ENCODE measurements at regions of chr5 and their contacts with region 1.

Region 1: DNA sequence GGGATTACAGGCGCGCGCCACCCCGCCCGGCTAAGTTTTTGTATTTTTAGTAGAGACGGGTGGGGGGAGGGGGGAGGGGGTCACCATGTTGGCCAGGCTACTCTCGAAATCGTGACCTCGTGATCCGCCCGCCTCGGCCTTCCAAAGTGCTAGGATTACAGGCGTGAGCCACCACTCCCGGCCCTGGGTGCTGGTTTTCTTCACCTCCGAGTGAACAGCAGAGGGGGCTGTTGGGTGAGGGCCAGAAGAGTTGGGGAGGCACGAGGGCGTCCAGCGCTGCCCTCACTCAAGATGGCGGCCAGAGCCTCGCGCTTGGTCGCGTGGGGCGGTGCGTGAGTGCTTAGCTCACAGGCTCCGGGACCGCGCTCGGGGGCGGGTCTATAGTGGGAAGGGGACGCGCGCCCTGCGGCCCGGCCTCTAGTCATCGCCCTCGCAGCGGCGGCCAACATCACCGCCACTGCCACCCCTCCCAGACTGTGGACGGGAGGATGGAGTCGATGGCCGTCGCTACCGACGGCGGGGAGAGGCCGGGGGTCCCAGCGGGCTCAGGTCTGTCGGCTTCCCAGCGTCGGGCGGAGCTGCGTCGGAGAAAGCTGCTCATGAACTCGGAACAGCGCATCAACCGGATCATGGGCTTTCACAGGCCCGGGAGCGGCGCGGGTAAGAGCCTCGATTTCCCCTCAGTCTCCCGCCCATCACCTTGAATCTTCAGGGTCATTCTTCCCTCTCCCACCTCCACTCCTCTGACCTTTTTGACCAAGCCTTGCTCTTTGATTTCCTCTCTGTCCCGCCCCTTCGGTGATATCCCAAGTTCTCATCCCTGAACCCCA is at the start of gene CAMLG:
- DNase-seq: peak; percentile 98
- ATAC-seq: peak; percentile 97
- H3K4me3 ChIP-seq: peak within 1 kb of the TSS; percentile 69 to 94 (median 89)
- H3K4me3 Mint-ChIP-seq: peak within 1 kb of the TSS; percentile 90
- H3K27ac ChIP-seq: peak within 1 kb of the TSS; percentile 77 to 89
- H3K27ac Mint-ChIP-seq: peak within 1 kb of the TSS; percentile 89
- H3K4me1 ChIP-seq: peaks cover 24 to 42% of the 10 kb centered on the region in 2 donors
- H3K4me1 Mint-ChIP-seq: peaks cover 33% of the 10 kb centered on the region
- H3K27me3 ChIP-seq: no peaks in the 10 kb centered on the region
- H3K27me3 Mint-ChIP-seq: no peaks in the 10 kb centered on the region
- CTCF ChIP-seq: peak; percentile 77
- total RNA-seq, gene CAMLG: 27.5 and 29.7 TPM in 2 replicates

Region 2: DNA sequence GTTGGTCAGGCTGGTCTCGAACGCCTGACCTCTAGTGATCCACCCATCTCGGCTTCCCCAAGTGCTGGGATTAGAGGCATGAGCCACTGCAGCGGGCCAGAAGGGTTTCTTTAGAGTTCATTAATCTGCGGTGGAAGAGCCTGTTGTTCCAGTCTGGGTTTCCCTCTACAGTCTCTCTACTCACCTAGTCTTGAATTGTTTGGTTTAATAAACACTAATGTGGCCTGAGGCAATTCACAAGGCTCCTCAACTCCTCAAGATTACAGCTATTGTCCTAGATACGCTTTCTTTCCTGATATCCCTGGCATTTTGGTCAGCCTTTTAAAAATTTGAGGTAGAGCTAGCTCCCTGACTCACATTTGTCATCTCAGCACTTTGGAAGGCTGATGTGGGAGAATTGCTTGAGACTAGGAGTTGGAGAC is 101.2 kb before region 1 on chr5:
- CTCF ChIA-PET with region 1: interaction called, 5 read pairs
- POLR2A ChIA-PET with region 1: no interaction called
- intact Hi-C with region 1: loop called (anchors 5 kb)
- DNase-seq: no peak
- ATAC-seq: no peak
- H3K4me3 ChIP-seq: no peak overlapping the region
- H3K4me3 Mint-ChIP-seq: no peak overlapping the region
- H3K27ac ChIP-seq: no peak overlapping the region
- H3K27ac Mint-ChIP-seq: no peak overlapping the region
- H3K4me1 ChIP-seq: peaks cover under 1 to 4% of the 10 kb centered on the region in 2 donors
- H3K4me1 Mint-ChIP-seq: peaks cover 6% of the 10 kb centered on the region
- H3K27me3 ChIP-seq: no peaks in the 10 kb centered on the region
- H3K27me3 Mint-ChIP-seq: no peaks in the 10 kb centered on the region
- CTCF ChIP-seq: no peak

Region 3: DNA sequence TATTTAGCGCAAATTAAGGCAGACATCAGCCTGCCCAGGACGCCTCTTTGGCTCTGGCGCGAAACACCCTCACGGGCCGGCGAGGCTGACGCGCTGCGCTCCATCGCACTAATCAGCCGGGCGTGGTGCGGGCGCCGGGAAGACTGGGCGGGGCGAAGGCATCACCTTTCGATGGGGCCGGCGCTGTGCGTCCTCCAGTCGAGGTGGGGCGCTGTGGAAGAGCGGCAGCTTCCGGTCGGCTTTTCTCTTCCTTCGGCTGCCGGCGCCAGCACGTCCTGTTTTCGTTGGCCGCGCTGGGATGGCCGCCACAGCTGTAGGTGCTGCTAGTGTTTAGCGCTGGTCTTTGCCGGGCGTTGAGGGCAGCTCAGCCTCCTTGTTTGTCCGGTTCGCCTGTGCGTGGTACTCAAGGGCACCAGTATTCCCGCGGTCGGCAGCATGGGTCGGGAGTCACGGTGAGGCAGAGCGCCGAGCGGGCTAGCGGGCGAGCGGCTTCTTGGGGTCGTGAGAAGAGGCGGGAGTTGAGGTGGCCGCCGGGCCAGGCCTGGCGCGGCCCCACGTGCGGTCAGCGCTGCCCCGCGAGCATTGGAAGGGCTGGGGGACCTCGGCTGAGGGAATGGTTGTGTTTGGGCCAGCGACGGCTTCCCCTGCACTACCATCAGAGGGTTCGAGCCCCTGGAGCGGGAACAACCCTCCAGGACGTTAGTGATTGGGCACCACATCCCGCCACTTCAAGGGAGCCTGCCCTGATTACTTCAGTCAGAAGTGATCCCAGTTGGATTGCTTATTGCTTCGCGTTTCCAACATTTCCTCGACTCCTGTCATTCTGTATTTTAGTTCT is 20.4 kb after region 1 on chr5 and contains the start of gene DDX46:
- CTCF ChIA-PET with region 1: interaction called, 70 read pairs
- POLR2A ChIA-PET with region 1: interaction called, 7 read pairs
- intact Hi-C with region 1: loop called (anchors 1 kb)
- DNase-seq: peak; percentile 95
- ATAC-seq: peak; percentile 99
- H3K4me3 ChIP-seq: peak within 1 kb of the TSS; percentile 77 to 97 (median 86)
- H3K4me3 Mint-ChIP-seq: peak within 1 kb of the TSS; percentile 100
- H3K27ac ChIP-seq: peak within 1 kb of the TSS; percentile 54 to 80
- H3K27ac Mint-ChIP-seq: peak within 1 kb of the TSS; percentile 97
- H3K4me1 ChIP-seq: peaks cover 18 to 19% of the 10 kb centered on the region in 2 donors
- H3K4me1 Mint-ChIP-seq: peaks cover 36% of the 10 kb centered on the region
- H3K27me3 ChIP-seq: no peaks in the 10 kb centered on the region
- H3K27me3 Mint-ChIP-seq: no peaks in the 10 kb centered on the region
- CTCF ChIP-seq: peak; percentile 78
- total RNA-seq, gene DDX46: 75.7 and 80.9 TPM in 2 replicates

Region 4: DNA sequence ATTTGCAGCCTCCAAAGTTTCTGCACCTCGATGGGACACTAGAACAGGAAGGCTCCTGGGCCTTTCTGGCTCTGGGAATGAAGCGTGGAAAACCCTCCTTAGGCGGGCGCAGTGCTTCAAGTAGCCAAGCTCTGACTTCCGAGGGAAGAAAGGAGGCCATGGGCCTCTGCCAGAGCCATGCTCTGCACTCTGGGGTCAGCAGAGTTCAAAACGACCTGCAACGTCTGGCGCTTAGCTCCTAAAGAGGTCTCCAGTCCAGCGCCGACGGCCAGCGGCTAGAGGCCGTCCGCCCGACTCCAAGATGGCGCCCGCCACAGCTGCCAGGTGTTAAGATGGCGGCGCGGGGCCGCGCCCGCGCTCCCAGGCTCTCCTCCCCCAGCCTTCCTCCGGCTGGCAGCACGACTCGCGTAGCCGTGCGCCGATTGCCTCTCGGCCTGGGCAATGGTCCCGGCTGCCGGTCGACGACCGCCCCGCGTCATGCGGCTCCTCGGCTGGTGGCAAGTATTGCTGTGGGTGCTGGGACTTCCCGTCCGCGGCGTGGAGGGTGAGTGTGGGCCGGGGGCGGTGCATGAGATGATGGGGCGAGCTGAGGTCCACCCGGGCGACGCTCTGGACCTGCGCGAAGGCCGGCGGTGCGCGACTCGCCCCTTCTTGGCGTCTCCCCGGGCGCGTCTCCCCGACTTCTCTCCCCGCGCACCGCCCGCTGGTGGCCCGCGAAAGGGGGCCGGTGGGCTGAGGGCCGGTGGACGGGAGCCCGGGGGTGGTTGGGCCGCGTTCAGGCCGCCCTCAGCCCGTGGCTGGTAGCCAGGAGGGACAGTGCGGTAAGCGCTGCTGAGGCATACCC is 135.9 kb after region 1 on chr5 and contains the start of gene TXNDC15:
- CTCF ChIA-PET with region 1: interaction called, 3 read pairs
- POLR2A ChIA-PET with region 1: interaction called, 4 read pairs
- intact Hi-C with region 1: loop called (anchors 1 kb)
- DNase-seq: peak; percentile 89
- ATAC-seq: peak; percentile 92
- H3K4me3 ChIP-seq: peak within 1 kb of the TSS; percentile 78 to 94 (median 88)
- H3K4me3 Mint-ChIP-seq: peak within 1 kb of the TSS; percentile 96
- H3K27ac ChIP-seq: peak within 1 kb of the TSS; percentile 91 to 95
- H3K27ac Mint-ChIP-seq: peak within 1 kb of the TSS; percentile 94
- H3K4me1 ChIP-seq: peaks cover 22 to 39% of the 10 kb centered on the region in 2 donors
- H3K4me1 Mint-ChIP-seq: peaks cover 37% of the 10 kb centered on the region
- H3K27me3 ChIP-seq: no peaks in the 10 kb centered on the region
- H3K27me3 Mint-ChIP-seq: no peaks in the 10 kb centered on the region
- CTCF ChIP-seq: no peak
- total RNA-seq, gene TXNDC15: 45.2 and 50.4 TPM in 2 replicates

Measured in B cell (primary cell).